Left ventricle myocardium superior (tissue), 1 donor: ENCODE measurements at regions of chr1 and their contacts with region 1.

Region 1: DNA sequence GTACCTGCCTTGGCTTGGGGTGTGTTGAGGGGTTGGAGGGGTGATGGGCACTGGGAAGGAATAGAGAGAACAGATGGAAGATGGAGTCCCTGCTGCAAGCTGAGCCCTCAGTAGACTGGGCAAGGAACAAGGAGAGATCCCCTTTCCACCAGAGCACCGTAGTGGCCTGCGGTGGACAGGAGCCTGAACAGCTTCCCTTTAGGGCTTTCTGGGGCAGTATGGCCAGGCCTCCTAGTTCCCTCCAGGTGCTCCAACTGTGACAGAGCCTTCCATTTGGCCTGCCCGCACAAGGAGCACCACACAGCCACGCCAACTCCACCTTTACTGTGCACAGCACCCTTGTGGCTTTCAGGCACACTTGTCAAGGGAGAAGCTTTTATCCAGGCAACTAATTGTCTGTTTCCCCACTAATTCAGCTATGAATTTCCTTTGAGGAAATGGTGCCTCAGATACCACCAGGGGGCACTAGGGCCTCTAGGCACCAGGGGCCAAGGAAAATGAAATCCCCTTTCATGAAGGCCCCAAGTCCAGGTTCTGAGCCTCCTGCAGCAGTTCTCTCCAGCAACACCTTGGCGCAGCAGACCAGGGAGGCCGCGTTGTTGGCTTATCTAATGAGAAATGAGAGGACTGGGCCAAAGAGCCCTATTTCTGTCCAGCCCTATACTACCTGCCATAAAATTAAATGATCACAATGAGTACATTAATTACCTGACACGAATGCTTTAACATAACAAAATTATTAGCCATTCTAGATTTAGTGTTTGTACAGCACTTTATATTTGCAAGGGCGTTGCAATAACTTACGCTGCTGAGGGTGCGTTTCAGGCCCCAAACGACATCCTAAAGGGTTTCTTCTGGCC is 23.1 kb upstream of the ERI3 start:
- DNase-seq: peak; percentile 39
- ATAC-seq: peak; percentile 30

Region 2: GRCh38 chr1:44553771-44554170 is 175.6 kb after region 1 on chr1:
- intact Hi-C with region 1: no loop called
- DNase-seq: no peak
- ATAC-seq: no peak

Region 3: GRCh38 chr1:44594871-44595746 is 217.0 kb after region 1 on chr1:
- intact Hi-C with region 1: loop called (anchors 2 kb)
- DNase-seq: peak; percentile 89
- ATAC-seq: peak; percentile 97